ENCODE measurements at regions of chr5 and their contacts with region 1.

Region 1: GRCh38 chr5:150778517-150779396 is at the start of gene SMIM3:
- DNase-seq: peak; percentile 59 to 70 (median 65)
- H3K4me3 ChIP-seq: peak within 1 kb of the TSS; percentile 67 to 77
- H3K4me3 Mint-ChIP-seq: peak within 1 kb of the TSS; percentile 97 to 99 (median 98)
- H3K27ac ChIP-seq: peak within 1 kb of the TSS; percentile 60
- H3K27ac Mint-ChIP-seq: peak within 1 kb of the TSS; percentile 93 to 99 (median 96)
- H3K4me1 ChIP-seq: peaks cover 52% of the 10 kb centered on the region
- H3K4me1 Mint-ChIP-seq: peaks cover 36 to 61% (median 52%) of the 10 kb centered on the region in 4 donors
- H3K27me3 ChIP-seq: no peaks in the 10 kb centered on the region
- H3K27me3 Mint-ChIP-seq: no peaks in the 10 kb centered on the region
- total RNA-seq, gene SMIM3: 7.9 to 8.0 TPM

Region 2: GRCh38 chr5:150458819-150459557 is 319.8 kb before region 1 on chr5:
- CTCF ChIA-PET with region 1: interaction called, 5 read pairs
- POLR2A ChIA-PET with region 1: no interaction called
- intact Hi-C with region 1: loop called (anchors 2 kb)
- DNase-seq: peak; percentile 82 to 86 (median 82)
- H3K4me3 ChIP-seq: no peak overlapping the region
- H3K4me3 Mint-ChIP-seq: peak overlapping the region in 5 of 8 donors; percentile 29 to 72 (median 49)
- H3K27ac ChIP-seq: no peak overlapping the region
- H3K27ac Mint-ChIP-seq: peak overlapping the region; percentile 52 to 88 (median 70)
- H3K4me1 ChIP-seq: peaks cover 19% of the 10 kb centered on the region
- H3K4me1 Mint-ChIP-seq: peaks cover 12 to 29% (median 21%) of the 10 kb centered on the region in 4 donors
- H3K27me3 ChIP-seq: no peaks in the 10 kb centered on the region
- H3K27me3 Mint-ChIP-seq: no peaks in the 10 kb centered on the region

Region 3: DNA sequence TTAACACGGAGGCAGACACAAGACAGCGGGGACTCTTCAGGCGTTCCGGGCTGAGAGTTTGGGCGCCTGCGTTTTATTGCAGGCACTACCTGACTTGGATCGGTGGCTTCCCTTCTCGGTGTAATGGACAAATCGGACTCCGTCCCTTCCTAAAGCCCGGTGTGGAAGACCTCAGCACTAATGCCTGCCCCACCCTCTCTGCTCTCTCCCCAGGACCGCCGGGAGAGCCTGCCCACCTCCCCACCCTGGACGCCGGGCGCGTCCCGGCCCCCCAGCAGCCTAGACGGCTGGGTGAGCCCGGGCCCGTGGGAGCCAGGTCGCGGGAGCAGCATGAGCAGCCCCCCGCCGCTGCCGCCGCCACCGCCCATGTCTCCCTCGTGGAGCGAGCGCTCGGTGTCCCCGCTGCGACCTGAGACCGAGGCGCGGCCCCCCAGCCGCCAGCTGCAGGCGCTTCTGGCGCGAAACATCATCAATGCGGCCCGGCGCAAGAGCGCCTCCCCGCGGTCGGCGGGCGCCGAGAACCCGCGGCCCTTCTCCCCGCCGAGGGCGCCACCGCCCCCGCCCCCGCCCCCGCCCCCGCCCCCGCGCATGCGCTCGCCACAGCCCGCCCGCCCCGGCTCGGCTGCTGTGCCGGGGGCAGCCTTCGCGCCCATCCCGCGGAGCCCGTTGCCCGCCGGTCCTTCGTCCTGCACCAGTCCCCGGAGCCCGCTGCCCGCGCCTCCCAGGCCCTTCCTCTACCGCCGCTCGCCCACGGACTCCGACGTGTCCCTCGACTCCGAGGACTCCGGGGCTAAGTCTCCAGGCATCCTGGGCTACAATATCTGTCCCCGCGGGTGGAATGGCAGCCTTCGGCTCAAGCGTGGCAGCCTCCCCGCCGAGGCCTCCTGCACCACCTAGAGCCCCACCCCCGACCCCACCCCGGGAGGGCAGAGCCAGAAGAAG is 122.3 kb before region 1 on chr5:
- CTCF ChIA-PET with region 1: interaction called, 5 read pairs
- POLR2A ChIA-PET with region 1: interaction called, 3 read pairs
- intact Hi-C with region 1: loop called (anchors 5 kb)
- DNase-seq: peak; percentile 76 to 85 (median 84)
- H3K4me3 ChIP-seq: peak overlapping the region; percentile 17 to 56
- H3K4me3 Mint-ChIP-seq: peak overlapping the region; percentile 81 to 92 (median 83)
- H3K27ac ChIP-seq: peak overlapping the region; percentile 28
- H3K27ac Mint-ChIP-seq: peak overlapping the region in 6 of 7 donors; percentile 11 to 88 (median 70)
- H3K4me1 ChIP-seq: peaks cover 12% of the 10 kb centered on the region
- H3K4me1 Mint-ChIP-seq: peaks cover 3 to 12% (median 9%) of the 10 kb centered on the region in 4 donors
- H3K27me3 ChIP-seq: no peaks in the 10 kb centered on the region
- H3K27me3 Mint-ChIP-seq: no peaks in the 10 kb centered on the region

Region 4: GRCh38 chr5:150789943-150790611 is 11.3 kb after region 1 on chr5:
- CTCF ChIA-PET with region 1: interaction called, 21 read pairs
- POLR2A ChIA-PET with region 1: interaction called, 24 read pairs
- intact Hi-C with region 1: no loop called
- DNase-seq: peak; percentile 39 to 84 (median 44)
- H3K4me3 ChIP-seq: no peak overlapping the region
- H3K4me3 Mint-ChIP-seq: peak overlapping the region in 7 of 8 donors; percentile 4 to 77 (median 57)
- H3K27ac ChIP-seq: peak overlapping the region; percentile 4
- H3K27ac Mint-ChIP-seq: peak overlapping the region; percentile 66 to 94 (median 82)
- H3K4me1 ChIP-seq: peaks cover 34% of the 10 kb centered on the region
- H3K4me1 Mint-ChIP-seq: peaks cover 30 to 51% (median 42%) of the 10 kb centered on the region in 4 donors
- H3K27me3 ChIP-seq: no peaks in the 10 kb centered on the region
- H3K27me3 Mint-ChIP-seq: no peaks in the 10 kb centered on the region

Region 5: DNA sequence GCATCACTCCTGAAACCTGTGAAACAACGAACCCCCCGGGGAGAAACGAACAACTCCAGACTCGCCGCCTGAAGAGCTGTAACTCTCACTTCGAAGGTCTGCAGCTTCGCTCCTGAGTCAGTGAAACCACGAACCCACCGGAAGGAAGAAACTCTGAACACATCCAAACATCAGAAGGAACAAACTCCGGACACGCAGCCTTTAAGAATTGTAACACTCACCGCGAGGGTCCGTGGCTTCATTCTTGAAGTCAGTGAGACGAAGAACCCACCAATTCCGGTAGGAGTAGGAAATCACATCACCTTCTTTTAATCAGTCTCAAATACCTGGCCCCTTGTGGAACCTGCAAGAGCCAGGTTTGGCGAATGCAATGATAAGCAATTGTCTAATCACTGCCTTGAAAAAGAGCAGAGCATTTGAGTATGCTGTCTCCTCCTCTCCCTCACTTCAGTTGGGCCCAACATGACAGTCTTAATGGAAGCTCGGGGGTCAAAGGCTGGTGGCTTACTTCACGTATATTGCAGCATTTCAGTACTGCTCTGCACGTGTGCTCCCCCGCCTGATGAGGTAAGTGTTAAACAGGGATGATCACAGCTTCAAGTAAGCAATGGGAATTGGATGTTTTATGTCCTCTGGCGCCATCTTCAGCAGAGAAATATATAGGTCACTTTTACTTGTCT is 68.0 kb after region 1 on chr5:
- CTCF ChIA-PET with region 1: interaction called, 34 read pairs
- POLR2A ChIA-PET with region 1: interaction called, 31 read pairs
- intact Hi-C with region 1: loop called (anchors 1 kb)
- DNase-seq: peak; percentile 76 to 85 (median 77)
- H3K4me3 ChIP-seq: peak overlapping the region in 1 of 2 donors; percentile 40
- H3K4me3 Mint-ChIP-seq: peak overlapping the region; percentile 83 to 91 (median 86)
- H3K27ac ChIP-seq: peak overlapping the region; percentile 50
- H3K27ac Mint-ChIP-seq: peak overlapping the region; percentile 76 to 95 (median 92)
- H3K4me1 ChIP-seq: peaks cover 8% of the 10 kb centered on the region
- H3K4me1 Mint-ChIP-seq: peaks cover 16 to 33% (median 26%) of the 10 kb centered on the region in 4 donors
- H3K27me3 ChIP-seq: no peaks in the 10 kb centered on the region
- H3K27me3 Mint-ChIP-seq: no peaks in the 10 kb centered on the region

Region 6: DNA sequence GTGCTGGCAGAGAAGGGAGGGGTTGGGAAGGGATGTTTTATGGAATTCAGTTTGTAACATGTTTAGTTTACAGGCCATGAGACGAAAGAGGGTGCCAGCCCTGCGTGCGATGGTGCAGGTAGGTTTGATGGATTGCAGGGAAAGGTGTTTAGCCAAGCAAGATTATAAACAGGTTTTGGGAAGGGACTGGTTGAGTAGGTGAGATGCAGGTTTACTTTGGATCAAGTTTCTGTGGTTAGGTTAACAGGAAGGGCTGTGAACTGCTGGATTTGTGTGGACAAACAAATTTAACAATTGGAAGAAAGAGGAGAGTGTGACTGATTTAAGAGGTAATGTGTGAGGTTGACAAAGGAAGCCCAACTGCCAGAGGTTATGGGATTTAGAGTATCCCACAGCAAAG is 209.0 kb after region 1 on chr5:
- CTCF ChIA-PET with region 1: no interaction called
- POLR2A ChIA-PET with region 1: no interaction called
- intact Hi-C with region 1: no loop called
- DNase-seq: no peak
- H3K4me3 ChIP-seq: no peak overlapping the region
- H3K4me3 Mint-ChIP-seq: no peak overlapping the region
- H3K27ac ChIP-seq: no peak overlapping the region
- H3K27ac Mint-ChIP-seq: no peak overlapping the region
- H3K4me1 ChIP-seq: no peaks in the 10 kb centered on the region
- H3K4me1 Mint-ChIP-seq: no peaks in the 10 kb centered on the region
- H3K27me3 ChIP-seq: no peaks in the 10 kb centered on the region
- H3K27me3 Mint-ChIP-seq: no peaks in the 10 kb centered on the region